Activated CD4-positive, alpha-beta memory T cell treated with anti-CD3 and anti-CD28 coated beads, Interleukin-2, amount 10 ng/mL, durations not matched to agents 7 days and 5 days (primary cell): ENCODE measurements at regions of chr6 and their contacts with region 1.

Region 1: DNA sequence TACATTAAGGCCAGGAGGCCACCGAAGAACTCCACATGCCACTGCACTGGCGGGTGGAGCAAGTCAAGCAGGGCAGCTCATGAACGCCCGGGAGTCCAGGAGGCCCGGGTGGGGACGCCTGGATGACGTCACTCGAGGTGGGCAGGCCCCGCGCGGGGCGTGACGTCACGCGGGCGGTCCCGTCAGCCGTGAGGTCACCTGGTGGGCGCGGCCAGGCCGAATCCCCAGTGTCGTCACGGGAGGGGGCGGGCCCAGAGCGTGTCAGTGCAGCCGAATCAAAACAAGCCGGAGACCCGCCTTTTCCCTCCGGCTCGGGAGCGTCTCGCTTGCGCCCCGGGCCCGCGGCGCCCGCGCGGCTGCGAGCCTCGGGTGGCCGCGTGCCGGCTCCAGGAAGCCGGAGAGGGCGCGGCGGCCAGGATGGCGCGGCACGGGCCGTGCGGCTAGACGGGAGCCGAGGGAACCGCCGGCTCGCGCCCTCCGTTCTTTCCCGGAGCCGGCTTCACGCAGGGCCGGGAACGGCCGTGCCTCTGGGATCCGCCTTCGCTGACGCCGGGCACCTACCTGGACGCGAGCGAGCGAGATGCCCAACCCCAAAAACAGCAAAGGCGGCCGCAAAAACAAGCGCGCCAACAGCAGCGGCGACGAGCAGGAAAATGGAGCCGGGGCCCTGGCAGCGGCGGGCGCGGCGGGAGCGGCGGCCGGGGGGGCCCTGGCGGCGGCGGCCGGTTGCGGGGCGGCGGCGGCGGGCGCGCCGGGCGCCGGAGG is at the start of gene HECA:
- DNase-seq: peak; percentile 99
- H3K4me3 Mint-ChIP-seq: peak within 1 kb of the TSS; percentile 82
- H3K27ac Mint-ChIP-seq: peak within 1 kb of the TSS; percentile 96
- H3K4me1 Mint-ChIP-seq: peaks cover 57% of the 10 kb centered on the region
- H3K27me3 Mint-ChIP-seq: no peaks in the 10 kb centered on the region
- total RNA-seq, gene HECA: 78.9 to 81.7 TPM

Region 2: GRCh38 chr6:139016337-139017213 is 118.4 kb before region 1 on chr6:
- CTCF ChIA-PET with region 1: no interaction called
- POLR2A ChIA-PET with region 1: no interaction called
- DNase-seq: no peak
- H3K4me3 Mint-ChIP-seq: no peak overlapping the region
- H3K27ac Mint-ChIP-seq: no peak overlapping the region
- H3K4me1 Mint-ChIP-seq: no peaks in the 10 kb centered on the region
- H3K27me3 Mint-ChIP-seq: peaks cover 6% of the 10 kb centered on the region

Region 3: GRCh38 chr6:139028658-139029469 is 106.1 kb before region 1 on chr6 and contains the start of gene ABRACL:
- CTCF ChIA-PET with region 1: interaction called, 7 read pairs
- POLR2A ChIA-PET with region 1: interaction called, 17 read pairs
- DNase-seq: peak; percentile 83
- H3K4me3 Mint-ChIP-seq: peak within 1 kb of the TSS; percentile 91
- H3K27ac Mint-ChIP-seq: peak within 1 kb of the TSS; percentile 75
- H3K4me1 Mint-ChIP-seq: peaks cover 25% of the 10 kb centered on the region
- H3K27me3 Mint-ChIP-seq: no peaks in the 10 kb centered on the region
- total RNA-seq, gene ABRACL: 174 to 176 TPM

Region 4: DNA sequence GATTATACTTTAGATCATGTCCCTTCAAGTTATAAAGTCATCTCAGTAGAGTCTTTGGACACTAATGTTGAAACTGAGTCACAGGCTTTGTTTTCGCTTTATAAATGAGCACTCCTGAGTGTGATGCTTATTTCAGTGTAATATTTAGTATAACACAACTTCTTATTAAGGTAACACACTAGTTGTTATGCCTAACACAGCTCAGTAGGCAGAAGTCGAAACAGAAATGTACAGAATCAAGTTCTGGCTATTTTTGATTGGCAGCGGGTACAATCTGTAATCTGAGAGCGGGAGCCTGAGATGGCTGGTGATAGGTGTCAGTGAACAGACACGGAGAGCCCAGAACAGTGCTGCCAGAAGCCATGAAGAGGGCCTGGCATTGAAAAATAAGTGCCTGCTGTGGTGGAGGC is 11.3 kb after region 1 on chr6:
- CTCF ChIA-PET with region 1: interaction called, 12 read pairs
- POLR2A ChIA-PET with region 1: interaction called, 119 read pairs
- DNase-seq: no peak
- H3K4me3 Mint-ChIP-seq: peak overlapping the region; percentile 49
- H3K27ac Mint-ChIP-seq: peak overlapping the region; percentile 88
- H3K4me1 Mint-ChIP-seq: peaks cover 93% of the 10 kb centered on the region
- H3K27me3 Mint-ChIP-seq: no peaks in the 10 kb centered on the region

Region 5: GRCh38 chr6:139161817-139162284 is 26.9 kb after region 1 on chr6:
- CTCF ChIA-PET with region 1: interaction called, 7 read pairs
- POLR2A ChIA-PET with region 1: interaction called, 55 read pairs
- DNase-seq: peak; percentile 77
- H3K4me3 Mint-ChIP-seq: peak overlapping the region; percentile 38
- H3K27ac Mint-ChIP-seq: peak overlapping the region; percentile 94
- H3K4me1 Mint-ChIP-seq: peaks cover 74% of the 10 kb centered on the region
- H3K27me3 Mint-ChIP-seq: no peaks in the 10 kb centered on the region

Region 6: GRCh38 chr6:139364302-139364981 is 229.4 kb after region 1 on chr6:
- CTCF ChIA-PET with region 1: interaction called, 14 read pairs
- POLR2A ChIA-PET with region 1: interaction called, 5 read pairs
- DNase-seq: no peak
- H3K4me3 Mint-ChIP-seq: no peak overlapping the region
- H3K27ac Mint-ChIP-seq: no peak overlapping the region
- H3K4me1 Mint-ChIP-seq: peaks cover 41% of the 10 kb centered on the region
- H3K27me3 Mint-ChIP-seq: no peaks in the 10 kb centered on the region